H1 (cell line): ENCODE measurements at regions of chr7 and their contacts with region 1.

Region 1: GRCh38 chr7:24572997-24573625 is at the start of gene PALS2:
- DNase-seq: peak in 1 of 2 experiments; percentile 87
- H3K4me3 ChIP-seq: peak within 1 kb of the TSS; percentile 82 to 93 (median 84)
- H3K27ac ChIP-seq: peak within 1 kb of the TSS; percentile 55; the same call in 1 of the 2 replicates
- H3K4me1 ChIP-seq: peaks cover 0 to 18% (median 4%) of the 10 kb centered on the region in 4 experiments; a peak in 5 of 7 replicates
- H3K27me3 ChIP-seq: peaks cover 0 to 4% (median 0%) of the 10 kb centered on the region in 4 experiments; a peak in 2 of 7 replicates
- CTCF ChIP-seq: no peak
- EP300 ChIP-seq: peak in 1 of 2 experiments; percentile 5; a peak in 1 of 3 replicates
- POLR2A ChIP-seq: no peak; a peak in 1 of 3 replicates
- RAD21 ChIP-seq: peak in 1 of 2 experiments; percentile 1; a peak in 1 of 4 replicates
- total RNA-seq, gene PALS2: 84.1 and 98.3 TPM in 2 replicates

Region 2: DNA sequence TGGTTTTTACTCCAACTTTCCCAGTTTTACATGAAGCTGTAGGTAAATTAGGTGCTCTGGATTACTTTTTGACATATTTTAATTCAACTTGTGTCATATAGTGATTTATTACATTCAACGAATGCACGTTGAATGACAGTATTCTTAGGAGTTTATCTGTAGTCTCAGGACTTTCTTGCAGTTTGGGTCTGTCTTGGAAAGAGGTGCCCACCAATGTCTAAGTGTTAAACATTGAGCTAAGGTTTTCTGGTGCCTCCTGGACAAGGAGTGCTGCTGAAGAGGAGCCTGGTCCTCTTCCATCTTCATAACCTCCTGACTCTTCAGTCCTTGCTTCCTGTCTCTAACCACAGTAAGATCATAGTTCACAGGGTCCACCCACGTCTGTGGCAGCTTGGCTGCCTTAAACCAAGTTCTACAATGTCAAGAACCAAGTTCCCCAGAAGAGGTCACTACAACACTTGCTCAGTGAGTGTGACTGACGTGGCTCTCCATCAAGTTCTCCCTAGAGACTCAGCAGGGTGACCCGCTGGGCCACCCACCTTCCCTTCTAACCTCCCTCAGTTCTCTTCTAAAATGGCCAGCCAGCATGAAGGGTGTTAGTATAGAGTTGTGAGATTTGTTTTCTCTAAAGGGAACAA is 283.0 kb before region 1 on chr7:
- CTCF ChIA-PET with region 1: interaction called, 10 read pairs
- POLR2A ChIA-PET with region 1: no interaction called
- DNase-seq: peak in 1 of 2 experiments; percentile 53
- H3K4me3 ChIP-seq: no peak overlapping the region
- H3K27ac ChIP-seq: no peak overlapping the region
- H3K4me1 ChIP-seq: peaks cover 0 to 4% (median 1%) of the 10 kb centered on the region in 4 experiments; a peak in 3 of 7 replicates
- H3K27me3 ChIP-seq: peaks cover under 1 to 9% (median 6%) of the 10 kb centered on the region in 4 experiments; a peak in 6 of 7 replicates
- CTCF ChIP-seq: peak; percentile 17 to 79 (median 62)
- EP300 ChIP-seq: no peak
- POLR2A ChIP-seq: no peak
- RAD21 ChIP-seq: peak; percentile 91 to 92

Region 3: DNA sequence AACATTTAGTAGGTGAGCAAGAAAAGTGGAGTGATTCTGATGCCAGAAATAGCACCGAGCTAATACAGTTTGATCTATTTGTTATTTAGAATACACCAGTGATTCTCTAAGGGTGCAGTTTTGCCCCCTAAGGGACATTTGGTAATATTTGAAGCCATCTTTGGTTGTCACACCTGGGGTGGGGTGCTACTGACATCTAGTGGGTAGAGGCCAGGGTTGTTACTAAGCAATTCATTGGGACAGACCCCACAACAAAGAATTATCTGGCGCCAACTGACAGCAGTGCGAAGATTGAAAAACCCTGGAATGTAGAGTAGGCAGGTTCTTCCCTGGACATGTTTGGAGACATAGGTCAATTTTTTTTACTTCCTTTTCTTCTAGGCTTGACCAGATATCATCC is 14.7 kb after region 1 on chr7:
- CTCF ChIA-PET with region 1: interaction called, 51 read pairs
- POLR2A ChIA-PET with region 1: interaction called, 4 read pairs
- DNase-seq: peak in 1 of 2 experiments; percentile 68
- H3K4me3 ChIP-seq: no peak overlapping the region
- H3K27ac ChIP-seq: no peak overlapping the region
- H3K4me1 ChIP-seq: peaks cover 0 to 4% (median 0%) of the 10 kb centered on the region in 4 experiments; a peak in 1 of 7 replicates
- H3K27me3 ChIP-seq: no peaks in the 10 kb centered on the region
- CTCF ChIP-seq: peak; percentile 38 to 94 (median 79)
- EP300 ChIP-seq: no peak
- POLR2A ChIP-seq: no peak
- RAD21 ChIP-seq: peak; percentile 95 to 96

Region 4: DNA sequence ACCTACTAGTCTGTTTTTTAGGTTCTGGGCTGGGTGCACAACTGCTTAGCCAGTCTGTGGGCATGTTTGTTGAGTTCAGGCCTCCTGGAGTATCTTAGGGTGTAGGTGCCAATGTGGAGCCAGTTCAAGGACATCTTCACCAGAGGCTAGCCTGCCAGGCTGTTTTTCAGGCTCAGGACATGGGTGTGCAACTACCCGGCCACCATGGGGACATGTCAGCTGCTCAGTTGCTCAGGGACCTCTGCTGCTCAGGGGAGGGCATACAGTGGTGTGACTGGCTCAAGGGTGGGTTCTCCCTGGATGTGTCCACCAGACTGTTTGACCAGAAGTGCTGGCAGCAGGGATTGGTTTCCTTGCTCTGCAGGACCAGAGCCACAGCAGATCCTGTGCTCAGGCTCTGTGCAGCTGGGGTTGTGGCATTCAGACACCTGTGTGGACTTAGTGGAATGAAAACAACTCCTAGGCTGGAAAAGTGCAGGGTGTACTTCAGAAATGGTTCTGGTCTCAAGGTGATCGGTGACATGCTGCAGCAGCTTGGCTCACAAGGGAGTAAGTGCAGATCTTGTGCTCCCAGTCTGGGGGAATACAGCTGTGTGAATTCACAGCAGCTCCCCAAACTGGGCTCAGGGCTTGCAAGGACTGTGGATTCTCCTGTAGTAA is 45.0 kb after region 1 on chr7:
- CTCF ChIA-PET with region 1: no interaction called
- POLR2A ChIA-PET with region 1: no interaction called
- DNase-seq: no peak
- H3K4me3 ChIP-seq: no peak overlapping the region
- H3K27ac ChIP-seq: no peak overlapping the region
- H3K4me1 ChIP-seq: peaks cover 0 to 10% (median 0%) of the 10 kb centered on the region in 4 experiments; a peak in 3 of 7 replicates
- H3K27me3 ChIP-seq: no peaks in the 10 kb centered on the region
- CTCF ChIP-seq: no peak
- EP300 ChIP-seq: no peak
- POLR2A ChIP-seq: no peak
- RAD21 ChIP-seq: no peak

Region 5: DNA sequence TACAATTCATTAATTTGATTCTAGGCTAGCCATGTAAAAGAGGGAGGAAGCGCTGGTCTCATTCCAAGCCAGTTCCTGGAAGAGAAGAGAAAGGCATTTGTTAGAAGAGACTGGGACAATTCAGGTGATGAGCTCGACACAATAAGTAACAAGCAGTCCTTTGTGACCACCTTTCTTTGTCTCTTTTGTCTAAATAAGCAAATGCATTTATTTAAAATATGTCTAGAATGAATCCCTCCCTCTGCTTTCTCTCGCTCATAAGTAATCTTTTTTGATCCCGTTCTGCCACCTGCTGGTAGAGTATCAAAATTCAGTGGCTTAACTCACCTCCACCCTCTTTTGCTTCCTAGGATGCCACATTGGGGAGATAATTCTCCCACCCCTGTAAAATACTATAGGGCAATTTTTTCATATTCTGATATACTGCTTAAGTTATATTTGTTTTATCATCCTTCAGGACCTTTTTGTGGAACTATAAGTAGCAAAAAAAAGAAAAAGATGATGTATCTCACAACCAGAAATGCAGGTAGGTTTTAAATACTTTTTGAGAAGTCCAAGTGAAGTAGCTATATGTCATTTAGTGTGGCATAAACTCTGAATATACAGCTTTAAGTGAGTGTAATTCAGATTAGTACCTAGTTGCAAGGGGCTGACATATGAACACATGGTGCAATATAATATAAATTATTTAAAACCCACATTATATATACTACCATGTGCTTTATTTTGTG is 92.6 kb after region 1 on chr7:
- CTCF ChIA-PET with region 1: interaction called, 14 read pairs
- POLR2A ChIA-PET with region 1: interaction called, 3 read pairs
- DNase-seq: peak in 1 of 2 experiments; percentile 21
- H3K4me3 ChIP-seq: no peak overlapping the region; a peak in 1 of 8 replicates
- H3K27ac ChIP-seq: no peak overlapping the region
- H3K4me1 ChIP-seq: peaks cover 0 to 4% (median 2%) of the 10 kb centered on the region in 4 experiments; a peak in 4 of 7 replicates
- H3K27me3 ChIP-seq: no peaks in the 10 kb centered on the region
- CTCF ChIP-seq: peak in 2 of 3 experiments; percentile 54 to 60; a peak in 2 of 4 replicates
- EP300 ChIP-seq: no peak
- POLR2A ChIP-seq: no peak
- RAD21 ChIP-seq: peak; percentile 74 to 77